ENCODE measurements at regions of chr19 and their contacts with region 1.

Region 1: DNA sequence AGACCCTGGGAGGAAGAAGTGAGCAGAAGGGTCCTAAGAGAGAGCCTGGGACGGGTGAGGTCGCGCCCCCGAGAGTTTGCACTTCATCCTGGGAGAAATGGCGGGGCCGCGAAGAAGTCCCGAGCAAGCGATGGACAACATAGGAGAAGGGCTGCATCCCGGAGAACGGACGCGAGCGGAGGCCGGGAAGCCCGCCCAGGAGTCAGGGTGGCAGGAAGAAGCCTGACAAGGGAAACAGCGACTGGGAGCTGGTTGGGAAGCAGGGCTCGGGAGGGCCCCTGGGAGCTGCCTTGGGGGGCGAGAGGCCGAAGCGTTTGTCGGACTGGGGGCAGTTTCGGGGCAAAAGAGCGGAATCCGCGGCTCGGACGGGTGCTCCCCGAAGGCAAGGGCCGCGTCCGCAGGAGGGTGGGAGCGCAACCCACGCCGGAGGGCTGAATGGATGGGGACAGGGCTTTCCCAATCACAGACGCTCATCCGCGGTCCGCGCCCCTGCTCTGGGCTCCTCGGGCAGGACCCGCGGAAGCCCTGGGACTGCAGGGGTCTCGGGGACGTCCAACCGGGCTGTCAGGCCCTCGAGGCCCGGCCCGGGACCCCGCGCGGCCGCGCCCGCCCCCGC is 469 bp downstream of the ABHD17A start:
- DNase-seq: no peak
- H3K4me3 Mint-ChIP-seq: peak overlapping the region; percentile 95
- H3K27ac Mint-ChIP-seq: peak overlapping the region; percentile 98
- H3K4me1 Mint-ChIP-seq: peaks cover 27% of the 10 kb centered on the region
- H3K27me3 Mint-ChIP-seq: no peaks in the 10 kb centered on the region

Region 2: GRCh38 chr19:1863726-1864480 is 20.9 kb before region 1 on chr19:
- CTCF ChIA-PET with region 1: interaction called, 19 read pairs
- POLR2A ChIA-PET with region 1: interaction called, 3 read pairs
- intact Hi-C with region 1: loop called (anchors 2 kb)
- DNase-seq: peak; percentile 94
- H3K4me3 Mint-ChIP-seq: peak overlapping the region; percentile 75
- H3K27ac Mint-ChIP-seq: peak overlapping the region; percentile 69
- H3K4me1 Mint-ChIP-seq: peaks cover 33% of the 10 kb centered on the region
- H3K27me3 Mint-ChIP-seq: no peaks in the 10 kb centered on the region

Region 3: GRCh38 chr19:1896508-1896907 is 11.7 kb after region 1 on chr19:
- CTCF ChIA-PET with region 1: interaction called, 6 read pairs
- POLR2A ChIA-PET with region 1: interaction called, 20 read pairs
- intact Hi-C with region 1: loop called (anchors 1 kb)
- DNase-seq: no peak
- H3K4me3 Mint-ChIP-seq: peak overlapping the region; percentile 84
- H3K27ac Mint-ChIP-seq: peak overlapping the region; percentile 98
- H3K4me1 Mint-ChIP-seq: peaks cover 26% of the 10 kb centered on the region
- H3K27me3 Mint-ChIP-seq: no peaks in the 10 kb centered on the region

Region 4: DNA sequence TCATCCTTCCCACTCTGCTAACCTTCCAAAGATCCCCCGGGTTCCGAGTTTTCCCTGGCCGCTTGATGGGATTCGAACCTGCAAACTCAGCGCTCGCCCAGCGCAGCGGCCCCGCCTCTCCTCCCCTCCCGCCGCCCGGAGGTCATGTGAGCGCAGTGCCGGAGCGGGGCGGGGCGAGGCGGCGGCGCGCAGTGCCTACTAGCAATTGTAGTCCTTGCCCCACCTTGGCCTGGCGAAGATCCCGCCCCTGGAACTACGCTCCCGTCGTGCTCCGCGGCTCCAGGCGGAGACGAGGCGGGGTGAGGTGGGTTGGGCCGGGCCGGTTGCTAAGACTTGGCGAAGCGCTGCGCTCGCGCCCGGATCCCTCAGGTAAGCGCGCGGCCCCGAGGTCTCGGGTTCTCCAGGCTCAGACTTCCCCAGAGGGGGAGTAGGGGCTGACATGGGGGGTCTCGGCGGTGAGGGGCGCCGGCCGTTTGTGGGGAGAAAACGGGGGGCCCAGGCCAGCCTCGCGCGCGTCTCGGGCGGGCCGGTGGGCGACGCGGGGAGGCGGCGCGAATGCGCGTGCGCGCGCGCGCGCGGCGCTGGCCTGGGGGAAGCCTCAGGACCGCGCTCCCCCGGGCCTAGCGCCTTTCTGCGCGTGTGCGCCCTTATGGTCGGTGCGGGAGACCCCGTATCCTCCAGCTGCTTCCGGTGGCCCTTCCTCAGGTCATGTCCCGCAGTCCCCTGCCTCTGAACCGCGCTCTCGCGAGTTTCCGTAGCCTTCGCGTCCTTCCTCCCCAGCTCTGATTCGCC is 20.4 kb after region 1 on chr19 and contains the starts of genes ADAT3 and SCAMP4:
- CTCF ChIA-PET with region 1: no interaction called
- POLR2A ChIA-PET with region 1: interaction called, 3 read pairs
- intact Hi-C with region 1: loop called (anchors 1 kb)
- DNase-seq: peak; percentile 99
- H3K4me3 Mint-ChIP-seq: peak within 1 kb of the TSS; percentile 87
- H3K27ac Mint-ChIP-seq: peak within 1 kb of the TSS; percentile 86
- H3K4me1 Mint-ChIP-seq: peaks cover 36% of the 10 kb centered on the region
- H3K27me3 Mint-ChIP-seq: no peaks in the 10 kb centered on the region
- total RNA-seq, gene ADAT3: 5.7 to 5.8 TPM
- total RNA-seq, gene SCAMP4: 24.2 to 28.4 TPM

Region 5: DNA sequence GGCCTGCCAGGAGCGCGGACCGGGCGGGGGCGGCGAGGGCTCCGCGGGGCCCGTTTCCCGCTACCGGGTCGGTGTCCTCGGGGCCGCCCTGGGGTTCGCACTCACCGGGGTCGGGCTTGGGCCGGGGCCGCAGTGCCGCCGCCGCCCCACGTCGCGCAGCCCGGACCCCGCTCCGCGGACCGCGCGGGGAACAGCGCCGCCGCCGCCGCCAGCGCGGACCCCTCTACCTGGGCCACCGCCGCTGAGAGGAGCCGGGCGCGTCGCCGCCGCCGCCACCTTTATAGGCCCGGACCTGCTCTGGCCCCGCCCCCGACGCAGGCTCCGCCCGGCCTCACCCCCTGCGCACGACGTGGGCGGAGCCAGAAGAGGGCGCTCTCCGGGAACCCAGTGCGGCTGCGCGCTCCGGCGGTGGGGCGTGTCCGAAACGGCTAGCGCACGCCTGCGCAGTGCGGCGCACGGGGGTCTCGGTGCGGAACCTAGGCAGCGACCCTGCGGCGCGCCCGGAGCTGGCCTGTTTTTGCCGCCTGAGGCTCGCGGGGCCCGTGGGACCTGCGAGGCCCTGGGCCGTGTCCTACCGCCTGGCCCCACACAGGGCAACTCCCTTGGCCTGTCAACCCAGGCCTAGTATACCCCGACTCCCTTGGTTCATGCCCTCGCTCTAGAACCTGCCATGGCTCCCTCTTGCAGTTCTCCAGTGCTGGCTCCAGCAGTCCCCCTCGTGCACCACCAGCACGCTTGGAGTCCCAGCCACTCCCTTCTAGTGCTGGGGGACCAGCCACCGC is 166.4 kb after region 1 on chr19 and contains the start of gene MKNK2:
- CTCF ChIA-PET with region 1: no interaction called
- POLR2A ChIA-PET with region 1: no interaction called
- intact Hi-C with region 1: no loop called
- DNase-seq: peak; percentile 95
- H3K4me3 Mint-ChIP-seq: peak within 1 kb of the TSS; percentile 86
- H3K27ac Mint-ChIP-seq: peak within 1 kb of the TSS; percentile 92
- H3K4me1 Mint-ChIP-seq: peaks cover 45% of the 10 kb centered on the region
- H3K27me3 Mint-ChIP-seq: no peaks in the 10 kb centered on the region
- total RNA-seq, gene MKNK2: 143 to 157 TPM

Region 6: DNA sequence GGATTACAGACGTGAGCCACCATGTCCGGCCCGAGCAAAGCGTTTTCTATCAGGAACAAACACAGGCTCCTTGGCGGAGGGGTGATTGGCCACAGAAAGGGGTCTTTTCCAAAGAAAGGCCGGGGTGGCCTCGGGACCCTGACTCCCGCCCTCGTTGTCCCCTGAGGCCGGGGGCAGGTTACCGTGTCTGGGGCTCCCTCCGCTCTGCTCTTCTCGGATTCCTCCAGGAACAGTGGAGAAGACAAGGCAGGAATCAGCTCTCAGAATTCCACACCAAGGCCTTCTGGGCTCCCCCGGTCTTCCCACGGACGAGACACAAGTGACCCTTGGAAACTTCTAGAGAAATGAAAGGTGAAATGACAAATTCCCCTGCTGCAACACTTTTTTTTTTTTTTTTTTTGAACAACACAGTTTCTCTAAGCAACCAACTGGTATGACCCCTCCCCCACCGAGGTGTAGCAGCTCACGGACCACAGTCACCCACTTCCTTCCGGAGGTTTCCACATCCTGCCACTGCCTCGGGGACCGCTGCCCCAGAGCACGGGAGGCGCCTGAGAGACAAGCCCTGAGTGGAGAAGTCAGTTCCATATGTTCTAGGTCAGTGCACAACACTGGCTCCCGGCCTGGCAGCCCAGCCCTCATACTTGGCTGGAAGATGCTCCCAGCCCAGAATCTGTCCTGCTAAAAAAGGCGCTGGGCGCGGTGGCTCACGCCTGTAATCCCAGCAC is 200.3 kb after region 1 on chr19:
- CTCF ChIA-PET with region 1: no interaction called
- POLR2A ChIA-PET with region 1: no interaction called
- intact Hi-C with region 1: loop called (anchors 5 kb)
- DNase-seq: peak; percentile 97
- H3K4me3 Mint-ChIP-seq: peak overlapping the region; percentile 99
- H3K27ac Mint-ChIP-seq: peak overlapping the region; percentile 99
- H3K4me1 Mint-ChIP-seq: peaks cover 59% of the 10 kb centered on the region
- H3K27me3 Mint-ChIP-seq: no peaks in the 10 kb centered on the region

Measured in activated CD4-positive, alpha-beta memory T cell treated with anti-CD3 and anti-CD28 coated beads for 36 hours (primary cell).